ENCODE measurements at regions of chr5 and their contacts with region 1.

Region 1: GRCh38 chr5:132566657-132567056 is 9.9 kb downstream of the RAD50 start:
- DNase-seq: no peak
- H3K4me3 ChIP-seq: no peak overlapping the region
- H3K27ac ChIP-seq: no peak overlapping the region
- H3K4me1 ChIP-seq: no peaks in the 10 kb centered on the region
- H3K27me3 ChIP-seq: no peaks in the 10 kb centered on the region
- CTCF ChIP-seq: no peak

Region 2: GRCh38 chr5:132905867-132906295 is 339.2 kb after region 1 on chr5:
- CTCF ChIA-PET with region 1: no interaction called
- POLR2A ChIA-PET with region 1: interaction called, 10 read pairs
- intact Hi-C with region 1: no loop called
- DNase-seq: peak in 1 of 2 experiments; percentile 43
- H3K4me3 ChIP-seq: no peak overlapping the region
- H3K27ac ChIP-seq: no peak overlapping the region
- H3K4me1 ChIP-seq: no peaks in the 10 kb centered on the region
- H3K27me3 ChIP-seq: no peaks in the 10 kb centered on the region
- CTCF ChIP-seq: no peak

Measured in PC-9 (cell line).